CD8-positive, alpha-beta T cell (primary cell): ENCODE measurements at regions of chr9 and their contacts with region 1.

Region 1: DNA sequence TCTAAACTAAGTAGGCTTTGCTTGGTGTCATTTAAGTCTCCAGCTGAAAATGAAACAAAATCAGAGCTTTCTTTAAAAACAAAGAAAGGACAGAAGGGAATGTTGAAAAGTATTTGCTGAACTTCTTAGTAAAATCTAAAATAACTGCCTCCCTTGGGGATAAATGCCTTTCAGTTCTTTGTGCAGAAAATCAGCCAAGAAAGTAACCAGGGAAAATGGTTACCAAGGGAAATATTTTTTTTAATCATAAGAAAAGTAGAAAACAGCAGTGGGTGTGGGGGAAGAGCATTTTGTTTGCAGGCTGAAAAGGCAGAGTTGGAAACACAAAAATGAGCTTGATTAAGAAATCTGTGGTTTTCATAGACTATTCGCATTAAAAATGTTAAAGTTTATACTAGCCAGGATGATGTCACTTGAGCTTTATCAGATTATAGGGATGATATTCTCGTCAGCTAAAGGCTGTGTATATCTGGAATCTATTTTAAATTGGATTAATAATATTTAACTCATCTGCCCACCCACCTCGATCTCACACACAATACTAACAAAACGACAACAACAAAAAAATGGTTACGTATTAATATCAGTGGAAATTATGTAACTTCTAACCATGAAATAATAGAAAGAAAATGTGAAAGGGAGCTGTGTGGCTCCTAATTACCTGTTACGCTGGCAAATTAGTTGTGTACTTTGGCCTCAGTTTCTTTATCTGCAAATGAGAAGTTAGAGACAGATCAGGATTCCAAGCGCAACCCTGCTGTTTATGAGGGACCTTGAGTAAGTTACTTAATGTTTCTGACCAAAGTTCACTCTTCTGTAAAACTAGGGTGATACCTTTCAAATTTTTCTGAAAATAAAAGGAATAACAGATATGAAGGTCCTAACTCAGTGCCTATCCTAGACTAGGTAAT is at the start of gene ECM2:
- DNase-seq: no peak
- ATAC-seq: no peak
- H3K4me3 ChIP-seq: no peak within 1 kb of the TSS
- H3K4me3 Mint-ChIP-seq: no peak within 1 kb of the TSS
- H3K27ac ChIP-seq: no peak within 1 kb of the TSS
- H3K27ac Mint-ChIP-seq: no peak within 1 kb of the TSS
- H3K4me1 ChIP-seq: no peaks in the 10 kb centered on the region
- H3K4me1 Mint-ChIP-seq: no peaks in the 10 kb centered on the region
- H3K27me3 ChIP-seq: no peaks in the 10 kb centered on the region
- H3K27me3 Mint-ChIP-seq: no peaks in the 10 kb centered on the region
- CTCF ChIP-seq: no peak
- total RNA-seq, gene ECM2: not detected

Region 2: GRCh38 chr9:92476962-92477361 is 59.2 kb before region 1 on chr9:
- CTCF ChIA-PET with region 1: no interaction called
- POLR2A ChIA-PET with region 1: no interaction called
- intact Hi-C with region 1: loop called in 1 of 2 experiments (anchors 10 kb)
- DNase-seq: no peak
- ATAC-seq: no peak
- H3K4me3 ChIP-seq: no peak overlapping the region
- H3K4me3 Mint-ChIP-seq: no peak overlapping the region
- H3K27ac ChIP-seq: no peak overlapping the region
- H3K27ac Mint-ChIP-seq: no peak overlapping the region
- H3K4me1 ChIP-seq: no peaks in the 10 kb centered on the region
- H3K4me1 Mint-ChIP-seq: peaks cover 2% of the 10 kb centered on the region
- H3K27me3 ChIP-seq: no peaks in the 10 kb centered on the region
- H3K27me3 Mint-ChIP-seq: no peaks in the 10 kb centered on the region
- CTCF ChIP-seq: no peak